ENCODE measurements at regions of chr6 and their contacts with region 1.

Region 1: DNA sequence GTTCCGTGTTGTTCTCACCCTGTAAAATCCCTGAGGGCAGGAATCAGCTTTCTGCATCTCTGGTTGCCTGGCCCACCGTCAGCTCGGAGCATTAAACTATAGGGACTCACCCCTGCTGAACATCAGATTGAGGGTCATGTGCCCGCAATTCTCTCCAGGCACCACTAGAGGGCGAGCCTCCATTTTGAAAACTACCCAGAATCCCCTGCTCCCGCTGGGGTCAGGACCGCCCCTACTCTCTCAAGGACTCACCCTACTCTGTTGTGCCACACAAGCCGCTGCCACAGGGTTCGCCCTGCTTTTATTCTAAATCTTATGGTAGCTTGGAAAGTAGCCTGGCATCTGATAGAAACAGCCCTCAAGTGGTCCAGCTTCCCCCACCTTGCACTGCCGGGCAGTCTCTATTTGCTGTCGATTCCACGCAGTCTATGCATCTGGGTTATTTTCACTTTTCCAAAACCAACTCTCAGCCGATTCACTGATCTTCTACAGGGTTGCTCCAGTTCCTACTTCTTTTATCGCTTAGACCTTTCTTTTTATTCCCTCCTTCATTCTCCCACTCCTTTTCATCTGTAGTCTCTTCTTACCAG is 244.1 kb upstream of the QKI start:
- DNase-seq: peak; percentile 43
- CTCF ChIP-seq: peak; percentile 68

Region 2: DNA sequence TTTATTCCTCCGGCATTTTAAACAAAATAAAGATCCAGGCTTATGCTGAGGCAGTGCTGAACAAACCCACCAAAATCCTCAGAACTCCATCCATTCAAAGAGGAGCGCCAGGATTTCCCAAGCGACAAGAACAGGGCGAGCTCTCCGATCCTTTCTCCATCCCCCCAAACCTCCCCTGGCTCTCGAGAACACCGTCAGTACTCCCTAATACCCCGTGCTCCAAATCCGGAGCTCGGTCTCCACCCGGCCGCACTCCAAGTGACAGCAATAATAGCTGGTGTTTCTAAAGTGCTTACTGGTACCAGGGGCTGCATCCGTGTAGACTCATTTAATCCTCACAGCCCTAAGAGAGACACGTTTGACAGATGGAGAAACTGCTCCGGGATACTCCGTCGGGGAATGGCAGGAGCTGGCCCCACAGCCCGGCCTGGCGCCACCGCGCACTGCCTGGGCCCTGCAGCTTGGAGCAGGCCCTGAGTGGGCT is 32.9 kb before region 1 on chr6:
- CTCF ChIA-PET with region 1: no interaction called
- POLR2A ChIA-PET with region 1: no interaction called
- DNase-seq: no peak
- CTCF ChIP-seq: no peak

Region 3: GRCh38 chr6:163159689-163160088 is 10.7 kb before region 1 on chr6:
- CTCF ChIA-PET with region 1: interaction called, 13 read pairs
- POLR2A ChIA-PET with region 1: no interaction called
- DNase-seq: no peak
- CTCF ChIP-seq: no peak

Measured in GM10248 (cell line).